GM18951 (cell line): ENCODE measurements at regions of chr2 and their contacts with region 1.

Region 1: DNA sequence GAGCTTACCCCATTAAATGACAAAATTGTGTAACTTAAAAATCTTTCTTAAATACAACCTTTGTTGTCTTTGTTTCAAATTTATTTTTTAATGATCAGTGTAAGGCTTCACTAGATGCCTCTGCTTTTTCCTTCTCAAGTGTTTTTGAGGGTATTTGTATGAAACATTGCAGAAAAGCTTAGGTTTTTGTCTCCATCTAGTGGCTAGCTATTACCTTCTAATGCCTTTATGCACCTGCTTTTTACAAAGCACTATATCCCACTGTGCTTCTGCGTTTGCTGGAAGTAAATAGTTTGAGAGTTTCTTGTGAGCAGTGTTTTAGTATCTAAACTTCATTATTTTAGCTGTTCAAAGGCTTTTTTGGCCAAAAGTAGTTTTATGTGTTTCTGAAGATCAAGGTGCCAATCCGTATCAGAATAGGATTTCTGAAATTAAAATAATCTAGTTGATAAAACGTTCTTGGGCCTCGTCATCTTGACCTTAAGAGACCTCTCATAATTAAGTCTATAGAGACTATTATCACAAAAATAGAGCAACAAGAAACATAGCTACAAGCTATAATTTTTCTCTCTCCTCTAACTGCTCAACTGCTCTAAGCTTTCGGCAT is 47.0 kb downstream of the IWS1 start:
- POLR2A ChIP-seq: no peak

Region 2: GRCh38 chr2:127197475-127198385 is 281.6 kb before region 1 on chr2:
- in situ Hi-C with region 1: loop called (anchors 10 kb)
- POLR2A ChIP-seq: no peak